Activated T-helper 1 cell treated with anti-CD3 and anti-CD28 coated beads, Interleukin-12 subunit alpha, Interleukin-12 subunit beta, Interleukin-2, Interleukin-4 antibody, amounts not matched to agents 30 ng/mL and 10 ng/mL and 1 ng/mL, durations not matched to agents 14 hours and 24 hours and 36 hours (primary cell): ENCODE measurements at regions of chr17 and their contacts with region 1.

Region 1: GRCh38 chr17:31900877-31901276 is 631 bp downstream of the UTP6 start:
- DNase-seq: no peak
- H3K4me3 Mint-ChIP-seq: no peak overlapping the region
- H3K27ac Mint-ChIP-seq: no peak overlapping the region
- H3K4me1 Mint-ChIP-seq: peaks cover 5% of the 10 kb centered on the region
- H3K27me3 Mint-ChIP-seq: no peaks in the 10 kb centered on the region

Region 2: DNA sequence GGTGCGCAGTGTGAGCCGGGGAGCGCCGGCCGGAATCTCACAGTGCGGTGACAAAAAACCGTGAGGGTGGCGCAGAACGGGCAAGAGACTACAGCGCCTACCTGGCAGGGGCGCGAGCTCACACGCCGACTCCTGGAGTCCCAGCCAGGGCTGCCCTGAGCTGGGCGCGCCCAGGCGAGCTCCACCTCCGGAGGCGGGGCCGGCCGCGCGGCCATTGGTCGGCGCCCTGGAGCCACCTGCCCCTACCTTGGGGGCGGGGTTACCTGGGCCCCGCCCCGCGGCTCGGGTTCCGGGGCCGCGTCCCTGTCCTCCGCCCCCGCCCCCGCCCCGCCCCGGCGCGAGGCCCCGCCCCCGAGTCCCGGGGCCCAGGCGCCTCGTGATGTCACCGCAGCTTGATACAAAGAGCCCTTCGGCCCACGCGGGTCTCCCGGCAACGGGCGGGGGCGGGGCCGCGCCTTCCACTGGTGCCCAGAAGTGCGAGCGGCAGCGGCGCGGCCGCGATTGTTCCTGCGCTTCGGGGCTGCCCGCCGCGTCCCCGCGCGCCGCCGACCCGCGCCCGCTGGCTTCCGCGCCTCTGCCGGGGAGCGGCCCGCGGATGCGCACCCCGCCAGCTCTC is 413.1 kb before region 1 on chr17:
- intact Hi-C with region 1: loop called (anchors 2 kb)
- DNase-seq: peak; percentile 89
- H3K4me3 Mint-ChIP-seq: peak overlapping the region; percentile 78
- H3K27ac Mint-ChIP-seq: peak overlapping the region; percentile 68
- H3K4me1 Mint-ChIP-seq: peaks cover 52% of the 10 kb centered on the region
- H3K27me3 Mint-ChIP-seq: peaks cover 2% of the 10 kb centered on the region

Region 3: GRCh38 chr17:31858642-31859473 is 42.0 kb before region 1 on chr17 and contains the start of gene COPRS:
- intact Hi-C with region 1: loop called (anchors 1 kb)
- DNase-seq: peak; percentile 74
- H3K4me3 Mint-ChIP-seq: peak within 1 kb of the TSS; percentile 83
- H3K27ac Mint-ChIP-seq: peak within 1 kb of the TSS; percentile 82
- H3K4me1 Mint-ChIP-seq: peaks cover 28% of the 10 kb centered on the region
- H3K27me3 Mint-ChIP-seq: peaks cover 2% of the 10 kb centered on the region
- total RNA-seq, gene COPRS: 62.2 and 64.6 TPM in 2 replicates

Region 4: DNA sequence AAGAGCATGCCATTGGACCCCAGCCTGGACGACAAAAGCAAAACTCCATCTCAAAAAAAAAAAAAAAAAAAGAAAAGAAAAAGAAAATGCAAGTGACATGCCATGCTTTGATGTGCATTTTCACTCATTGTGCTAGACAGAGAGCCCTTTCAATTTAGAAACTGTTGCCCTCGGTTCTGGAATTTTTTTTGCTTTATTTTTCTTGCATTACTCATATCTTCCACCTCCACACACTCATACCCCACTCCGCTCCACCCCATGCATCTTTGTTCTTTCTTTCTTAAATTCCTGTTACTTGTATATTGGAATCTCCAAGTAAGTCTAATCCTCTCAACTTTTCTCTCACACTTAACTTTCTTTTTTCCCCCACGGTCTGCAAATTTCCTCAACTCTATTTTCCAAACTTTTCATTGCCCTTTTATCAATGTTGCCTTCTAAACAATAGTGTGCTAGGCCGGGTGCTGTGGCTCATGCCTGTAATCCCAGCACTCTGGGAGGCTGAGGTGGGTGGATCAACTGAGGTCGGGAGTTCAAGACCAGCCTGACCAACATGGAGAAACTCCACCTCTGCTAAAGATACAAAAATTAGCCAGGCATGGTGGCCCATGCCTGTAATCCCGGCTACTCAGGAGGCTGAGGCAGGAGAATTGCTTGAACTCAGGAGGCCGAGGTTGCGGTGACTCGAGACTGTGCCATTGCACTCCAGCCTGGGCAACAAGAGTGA is 19.1 kb after region 1 on chr17:
- intact Hi-C with region 1: loop called (anchors 1 kb)
- DNase-seq: no peak
- H3K4me3 Mint-ChIP-seq: peak overlapping the region; percentile 9
- H3K27ac Mint-ChIP-seq: peak overlapping the region; percentile 83
- H3K4me1 Mint-ChIP-seq: peaks cover 19% of the 10 kb centered on the region
- H3K27me3 Mint-ChIP-seq: peaks cover 17% of the 10 kb centered on the region

Region 5: DNA sequence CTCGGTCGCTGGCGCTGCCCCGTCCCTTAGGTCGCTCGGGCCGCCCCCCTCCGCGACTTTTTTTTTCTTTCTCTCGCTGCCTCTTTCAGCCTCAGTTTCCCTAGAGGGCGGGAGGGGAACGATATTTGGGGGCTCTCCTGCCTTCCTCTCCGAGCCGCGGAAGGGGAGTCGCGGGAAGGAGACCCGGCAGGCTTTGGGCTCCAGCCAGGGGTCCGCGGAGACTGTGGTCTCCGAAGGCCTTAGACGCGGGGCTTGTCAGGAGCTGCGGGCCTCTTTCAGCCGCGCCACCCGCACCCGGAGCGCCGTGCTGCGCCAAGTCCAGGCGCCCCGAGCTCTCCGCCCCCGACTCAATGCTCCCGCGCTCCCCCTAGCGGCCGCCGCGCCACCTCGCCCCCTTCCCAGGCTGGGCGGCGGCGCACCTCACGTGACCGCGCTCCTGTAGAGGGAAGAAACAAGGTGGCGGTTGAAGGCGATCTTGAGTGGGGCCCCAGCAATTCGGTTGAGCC is 106.1 kb after region 1 on chr17 and contains the start of gene LRRC37B:
- intact Hi-C with region 1: loop called (anchors 1 kb)
- DNase-seq: peak; percentile 87
- H3K4me3 Mint-ChIP-seq: peak within 1 kb of the TSS; percentile 93
- H3K27ac Mint-ChIP-seq: peak within 1 kb of the TSS; percentile 90
- H3K4me1 Mint-ChIP-seq: peaks cover 36% of the 10 kb centered on the region
- H3K27me3 Mint-ChIP-seq: no peaks in the 10 kb centered on the region
- total RNA-seq, gene LRRC37B: 16.7 and 22.7 TPM in 2 replicates